Activated CD8-positive, alpha-beta T cell treated with anti-CD3 and anti-CD28 coated beads for 36 hours (primary cell): ENCODE measurements at regions of chr3 and their contacts with region 1.

Region 1: DNA sequence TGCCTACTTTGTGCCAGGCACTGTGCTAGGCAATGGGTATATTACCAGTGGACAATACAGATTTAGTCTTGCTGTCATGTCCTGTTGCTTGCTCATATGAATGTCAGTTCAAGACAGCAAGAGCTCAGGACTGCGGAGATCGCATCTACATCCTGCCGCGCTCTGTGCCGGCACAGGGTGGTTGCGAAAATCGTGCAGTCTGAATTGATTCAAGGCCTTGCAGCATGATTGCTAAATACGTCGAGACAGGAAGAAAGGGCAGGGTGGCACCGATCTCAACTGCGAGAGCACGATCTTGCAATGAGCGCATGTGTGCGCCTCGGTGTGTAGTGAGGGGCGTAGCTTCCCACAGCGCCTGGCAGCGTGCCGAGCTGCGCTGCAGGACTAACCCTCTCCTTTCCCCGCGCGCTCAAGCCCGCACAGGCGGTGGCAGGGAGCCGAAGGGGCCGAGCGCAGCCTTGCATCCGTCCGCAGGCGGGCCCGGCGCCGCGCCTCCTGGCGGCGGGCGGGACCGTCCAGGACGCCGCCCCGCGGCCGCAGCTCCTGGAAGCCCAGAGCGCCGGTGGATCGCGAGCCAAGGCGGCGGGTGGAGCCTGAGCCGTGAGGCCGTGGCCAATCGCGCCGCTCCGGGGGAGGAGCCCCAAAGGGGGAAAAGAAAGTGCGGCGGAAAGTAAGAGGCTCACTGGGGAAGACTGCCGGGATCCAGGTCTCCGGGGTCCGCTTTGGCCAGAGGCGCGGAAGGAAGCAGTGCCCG is at the start of gene IL1RAP:
- DNase-seq: peak; percentile 87
- ATAC-seq: peak; percentile 92
- H3K4me3 Mint-ChIP-seq: peak within 1 kb of the TSS; percentile 83
- H3K27ac Mint-ChIP-seq: peak within 1 kb of the TSS; percentile 76
- H3K4me1 Mint-ChIP-seq: peaks cover 35% of the 10 kb centered on the region
- H3K27me3 Mint-ChIP-seq: no peaks in the 10 kb centered on the region
- CTCF ChIP-seq: peak; percentile 45
- total RNA-seq, gene IL1RAP: 18.8 to 20.2 TPM

Region 2: DNA sequence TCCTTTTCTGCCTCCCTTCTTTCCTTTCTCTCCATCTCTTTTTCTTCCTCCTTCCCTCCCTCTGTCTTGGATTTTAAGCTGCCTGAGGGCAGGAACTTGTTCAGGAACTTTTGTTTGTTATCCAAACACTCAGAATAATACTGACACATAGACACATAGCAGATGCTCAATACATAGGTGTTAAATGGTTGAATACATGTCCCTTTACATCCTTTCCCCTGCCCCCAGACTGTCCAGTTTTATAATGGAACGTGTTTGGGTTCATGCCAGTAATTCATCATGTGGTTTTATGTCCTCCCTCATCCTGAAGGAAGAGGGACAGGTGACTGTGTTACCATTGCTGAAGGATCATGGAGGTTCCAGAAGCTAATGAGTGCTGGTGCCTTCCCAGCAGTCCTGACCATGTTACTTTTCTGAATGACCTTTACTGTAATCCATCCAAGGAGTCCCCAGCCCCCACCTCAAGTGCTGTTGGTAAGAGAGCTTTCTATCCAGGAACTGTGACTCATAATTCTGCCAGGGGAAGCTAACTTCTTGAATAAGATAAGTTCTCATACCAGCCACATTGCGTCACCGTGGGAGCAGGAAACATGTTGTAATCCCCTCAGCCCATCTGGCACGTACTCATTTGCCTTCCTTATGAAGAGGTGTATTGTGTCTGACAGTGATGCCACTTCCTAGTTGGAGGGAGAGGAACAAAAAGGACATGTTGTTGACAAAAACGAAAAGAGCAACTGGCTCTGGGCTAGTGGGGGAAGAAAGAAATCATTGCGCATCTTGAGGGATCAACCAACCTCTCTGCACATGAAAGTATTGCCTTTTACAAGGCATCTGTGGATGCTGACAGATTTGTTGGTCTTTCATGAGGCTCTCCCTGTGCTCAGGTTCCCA is 52.7 kb after region 1 on chr3:
- CTCF ChIA-PET with region 1: interaction called, 8 read pairs
- POLR2A ChIA-PET with region 1: interaction called, 3 read pairs
- intact Hi-C with region 1: loop called (anchors 5 kb)
- DNase-seq: peak; percentile 95
- ATAC-seq: peak; percentile 90
- H3K4me3 Mint-ChIP-seq: no peak overlapping the region
- H3K27ac Mint-ChIP-seq: peak overlapping the region; percentile 88
- H3K4me1 Mint-ChIP-seq: peaks cover 71% of the 10 kb centered on the region
- H3K27me3 Mint-ChIP-seq: no peaks in the 10 kb centered on the region
- CTCF ChIP-seq: no peak

Region 3: GRCh38 chr3:190617185-190617584 is 103.6 kb after region 1 on chr3:
- CTCF ChIA-PET with region 1: interaction called, 5 read pairs
- POLR2A ChIA-PET with region 1: interaction called, 3 read pairs
- intact Hi-C with region 1: loop called (anchors 5 kb)
- DNase-seq: peak; percentile 72
- ATAC-seq: peak; percentile 31
- H3K4me3 Mint-ChIP-seq: no peak overlapping the region
- H3K27ac Mint-ChIP-seq: peak overlapping the region; percentile 86
- H3K4me1 Mint-ChIP-seq: peaks cover 63% of the 10 kb centered on the region
- H3K27me3 Mint-ChIP-seq: no peaks in the 10 kb centered on the region
- CTCF ChIP-seq: no peak

Region 4: GRCh38 chr3:190696777-190697501 is 183.4 kb after region 1 on chr3:
- CTCF ChIA-PET with region 1: interaction called, 7 read pairs
- POLR2A ChIA-PET with region 1: no interaction called
- intact Hi-C with region 1: loop called (anchors 5 kb)
- DNase-seq: peak; percentile 7
- ATAC-seq: no peak
- H3K4me3 Mint-ChIP-seq: no peak overlapping the region
- H3K27ac Mint-ChIP-seq: no peak overlapping the region
- H3K4me1 Mint-ChIP-seq: no peaks in the 10 kb centered on the region
- H3K27me3 Mint-ChIP-seq: peaks cover 25% of the 10 kb centered on the region
- CTCF ChIP-seq: peak; percentile 64